ENCODE measurements at regions of chr3 and their contacts with region 1.

Region 1: GRCh38 chr3:115783938-115784738 is 160.8 kb downstream of the GAP43 start:
- DNase-seq: peak; percentile 95 to 98 (median 98)
- H3K4me3 ChIP-seq: peak overlapping the region; percentile 68 to 82 (median 74)
- H3K27ac ChIP-seq: peak overlapping the region; percentile 69 to 78
- H3K4me1 ChIP-seq: peaks cover 0 to 15% (median 10%) of the 10 kb centered on the region in 4 experiments
- H3K27me3 ChIP-seq: peaks cover 0 to 7% (median 0%) of the 10 kb centered on the region in 5 experiments

Region 2: DNA sequence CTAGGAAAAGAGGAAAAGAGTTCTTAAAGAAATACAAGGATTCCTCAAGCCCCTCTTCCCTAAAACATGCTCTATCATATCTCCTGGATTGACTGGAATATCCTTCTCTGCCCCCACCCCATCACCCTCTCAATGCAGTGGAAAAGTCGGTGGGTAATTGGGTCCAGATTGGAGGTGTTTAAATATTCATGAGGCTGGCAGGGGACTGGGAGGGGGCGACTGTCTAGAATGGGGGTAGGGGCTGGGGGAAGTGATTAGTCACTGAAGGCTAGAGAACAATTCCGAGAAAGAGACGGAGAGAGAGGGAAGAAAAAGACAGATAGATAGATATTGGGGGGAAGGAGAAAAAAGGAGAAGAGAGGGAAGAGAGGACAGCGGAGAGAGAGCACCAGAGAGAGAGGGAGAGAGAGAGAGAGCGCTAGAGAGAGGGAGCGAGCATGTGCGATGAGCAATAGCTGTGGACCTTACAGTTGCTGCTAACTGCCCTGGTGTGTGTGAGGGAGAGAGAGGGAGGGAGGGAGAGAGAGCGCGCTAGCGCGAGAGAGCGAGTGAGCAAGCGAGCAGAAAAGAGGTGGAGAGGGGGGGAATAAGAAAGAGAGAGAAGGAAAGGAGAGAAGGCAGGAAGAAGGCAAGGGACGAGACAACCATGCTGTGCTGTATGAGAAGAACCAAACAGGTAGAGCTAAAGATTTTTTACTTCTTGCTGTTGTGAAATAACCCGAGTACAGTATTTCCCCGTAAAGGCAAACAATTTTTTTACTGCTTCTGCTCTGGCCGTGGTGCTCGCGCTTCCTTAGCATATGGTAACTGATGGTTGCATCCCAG is 160.9 kb before region 1 on chr3 and contains the start of gene GAP43:
- CTCF ChIA-PET with region 1: no interaction called
- POLR2A ChIA-PET with region 1: no interaction called
- DNase-seq: peak; percentile 5 to 35 (median 29)
- H3K4me3 ChIP-seq: peak within 1 kb of the TSS in 2 of 7 experiments; percentile 37 to 51
- H3K27ac ChIP-seq: no peak within 1 kb of the TSS
- H3K4me1 ChIP-seq: peaks cover 0 to 8% (median 0%) of the 10 kb centered on the region in 4 experiments
- H3K27me3 ChIP-seq: peaks cover 9 to 57% (median 41%) of the 10 kb centered on the region in 5 experiments

Region 3: GRCh38 chr3:115814778-115815380 is 30.7 kb after region 1 on chr3:
- CTCF ChIA-PET with region 1: interaction called, 23 read pairs
- POLR2A ChIA-PET with region 1: no interaction called
- DNase-seq: peak; percentile 49 to 67 (median 51)
- H3K4me3 ChIP-seq: no peak overlapping the region
- H3K27ac ChIP-seq: no peak overlapping the region
- H3K4me1 ChIP-seq: no peaks in the 10 kb centered on the region
- H3K27me3 ChIP-seq: peaks cover 0 to 5% (median 2%) of the 10 kb centered on the region in 5 experiments

Region 4: GRCh38 chr3:115819785-115820384 is 35.7 kb after region 1 on chr3:
- CTCF ChIA-PET with region 1: interaction called, 23 read pairs
- POLR2A ChIA-PET with region 1: no interaction called
- DNase-seq: peak; percentile 88 to 93 (median 88)
- H3K4me3 ChIP-seq: no peak overlapping the region
- H3K27ac ChIP-seq: no peak overlapping the region
- H3K4me1 ChIP-seq: no peaks in the 10 kb centered on the region
- H3K27me3 ChIP-seq: peaks cover 0 to 1% (median 0%) of the 10 kb centered on the region in 5 experiments

Measured in common myeloid progenitor, CD34-positive (primary cell).